ENCODE measurements at regions of chr2 and their contacts with region 1.

Region 1: DNA sequence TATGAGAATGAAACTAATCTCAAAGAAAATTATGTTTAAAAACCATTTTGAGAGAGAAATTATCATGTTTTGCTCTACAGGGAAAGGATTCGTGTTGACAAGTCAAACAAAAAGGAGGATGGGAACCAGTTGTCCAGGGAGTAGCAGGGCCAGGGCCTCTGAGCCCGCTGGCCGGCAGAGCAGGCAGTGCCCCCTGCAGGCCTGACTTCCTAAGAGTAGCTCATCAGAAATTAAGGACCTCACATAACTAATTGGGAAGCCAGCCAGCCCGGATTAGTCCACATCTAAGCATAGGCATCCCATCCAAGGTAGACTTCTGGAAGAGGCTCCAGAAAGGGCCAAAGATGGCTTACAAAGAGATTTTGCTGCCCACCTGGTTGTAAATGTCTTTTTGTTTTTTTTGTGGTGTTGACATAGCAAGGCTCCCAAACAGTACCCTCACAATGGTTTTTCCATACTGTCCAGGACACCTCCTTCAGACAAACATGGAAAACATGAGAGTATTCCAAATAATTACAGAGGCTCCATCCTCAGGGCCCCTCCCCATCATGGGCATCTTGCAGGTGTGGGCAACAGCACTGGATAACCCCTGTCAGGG is 241.2 kb upstream of the TANK start:
- DNase-seq: peak in 21 of 35 experiments; percentile 1 to 47 (median 6)
- ATAC-seq: no peak
- H3K4me3 ChIP-seq: no peak overlapping the region
- H3K4me3 Mint-ChIP-seq: no peak overlapping the region
- H3K27ac ChIP-seq: no peak overlapping the region
- H3K27ac Mint-ChIP-seq: no peak overlapping the region
- H3K4me1 ChIP-seq: no peaks in the 10 kb centered on the region
- H3K4me1 Mint-ChIP-seq: no peaks in the 10 kb centered on the region
- H3K27me3 ChIP-seq: peaks cover 0 to 3% of the 10 kb centered on the region in 2 experiments
- H3K27me3 Mint-ChIP-seq: no peaks in the 10 kb centered on the region

Region 2: GRCh38 chr2:160324161-160324800 is 594.7 kb before region 1 on chr2:
- CTCF ChIA-PET with region 1: interaction called in 1 of 2 experiments, 15 read pairs
- POLR2A ChIA-PET with region 1: no interaction called
- DNase-seq: peak in 30 of 35 experiments; percentile 4 to 61 (median 32)
- ATAC-seq: no peak
- H3K4me3 ChIP-seq: no peak overlapping the region
- H3K4me3 Mint-ChIP-seq: no peak overlapping the region
- H3K27ac ChIP-seq: no peak overlapping the region
- H3K27ac Mint-ChIP-seq: no peak overlapping the region
- H3K4me1 ChIP-seq: peaks cover 28 to 47% of the 10 kb centered on the region in 2 experiments
- H3K4me1 Mint-ChIP-seq: peaks cover 93 to 96% (median 94%) of the 10 kb centered on the region in 3 donors
- H3K27me3 ChIP-seq: no peaks in the 10 kb centered on the region
- H3K27me3 Mint-ChIP-seq: no peaks in the 10 kb centered on the region

Measured in T-cell (primary cell).